PC-9 (cell line): ENCODE measurements at regions of chr1 and their contacts with region 1.

Region 1: GRCh38 chr1:23559136-23559984 is at the start of gene ID3:
- DNase-seq: peak; percentile 87 to 96
- H3K4me3 ChIP-seq: peak within 1 kb of the TSS; percentile 67
- H3K27ac ChIP-seq: peak within 1 kb of the TSS; percentile 96
- H3K4me1 ChIP-seq: peaks cover 42% of the 10 kb centered on the region
- H3K27me3 ChIP-seq: no peaks in the 10 kb centered on the region
- CTCF ChIP-seq: no peak
- total RNA-seq, gene ID3: 10.4 and 24.7 TPM in 2 replicates

Region 2: DNA sequence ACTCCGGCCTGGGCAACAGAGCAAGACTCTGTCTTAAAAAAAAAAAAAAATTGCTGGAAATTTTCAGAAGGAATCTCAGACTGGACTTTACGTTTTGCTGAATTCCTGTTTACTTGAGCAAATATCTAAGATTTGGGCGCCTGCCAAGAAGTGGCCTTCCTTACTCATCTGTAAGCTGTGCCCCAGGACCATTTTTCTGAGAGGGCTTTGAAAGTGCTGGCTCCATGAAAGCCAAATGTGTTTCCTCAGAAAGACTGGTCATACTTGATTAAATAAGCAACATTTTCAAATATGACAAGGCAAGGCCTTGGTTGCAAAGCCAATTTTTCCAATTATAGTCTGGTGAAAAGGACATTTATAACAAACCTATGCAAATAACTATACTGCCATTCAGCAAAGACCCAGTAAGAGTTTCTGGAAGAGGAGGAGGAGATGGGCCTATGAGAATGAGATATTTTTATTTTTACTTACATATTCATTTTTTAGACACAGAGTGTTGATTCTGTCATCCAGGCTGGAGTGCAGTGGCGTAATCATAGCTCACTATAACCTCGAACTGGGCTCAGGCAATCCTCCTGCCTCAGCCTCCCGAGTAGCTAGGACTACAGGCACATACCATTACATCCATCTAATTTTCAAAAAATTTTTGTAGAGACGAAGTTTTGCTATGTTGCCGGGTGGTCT is 285.8 kb before region 1 on chr1:
- CTCF ChIA-PET with region 1: no interaction called
- POLR2A ChIA-PET with region 1: no interaction called
- intact Hi-C with region 1: no loop called
- DNase-seq: peak; percentile 46 to 57
- H3K4me3 ChIP-seq: no peak overlapping the region
- H3K27ac ChIP-seq: no peak overlapping the region
- H3K4me1 ChIP-seq: peaks cover 24% of the 10 kb centered on the region
- H3K27me3 ChIP-seq: no peaks in the 10 kb centered on the region
- CTCF ChIP-seq: no peak

Region 3: GRCh38 chr1:23585447-23586015 is 26.2 kb after region 1 on chr1:
- CTCF ChIA-PET with region 1: no interaction called
- POLR2A ChIA-PET with region 1: interaction called, 4 read pairs
- intact Hi-C with region 1: loop called (anchors 1 kb)
- DNase-seq: peak; percentile 56 to 91
- H3K4me3 ChIP-seq: no peak overlapping the region
- H3K27ac ChIP-seq: peak overlapping the region; percentile 80
- H3K4me1 ChIP-seq: peaks cover 13% of the 10 kb centered on the region
- H3K27me3 ChIP-seq: no peaks in the 10 kb centered on the region
- CTCF ChIP-seq: no peak

Region 4: DNA sequence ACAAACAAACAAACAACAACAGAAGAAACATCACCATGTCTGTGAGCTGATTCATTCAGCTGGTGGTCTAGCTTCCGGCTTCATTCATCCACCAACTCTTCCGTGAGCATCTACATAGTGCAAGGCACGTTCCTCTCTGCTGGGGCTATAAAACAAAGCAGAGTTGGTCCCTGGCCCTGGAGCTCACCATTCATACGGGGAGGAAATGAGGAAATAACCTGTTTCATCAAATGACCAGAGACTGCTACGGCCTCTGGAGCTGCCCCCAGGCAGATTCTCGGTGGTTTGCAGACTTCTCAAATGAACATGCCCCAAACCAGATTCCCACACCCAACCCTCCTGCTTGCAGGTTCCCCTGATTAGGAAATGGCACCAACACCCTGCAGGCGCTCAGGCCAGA is 40.9 kb after region 1 on chr1:
- CTCF ChIA-PET with region 1: interaction called, 14 read pairs
- POLR2A ChIA-PET with region 1: interaction called, 17 read pairs
- intact Hi-C with region 1: no loop called
- DNase-seq: peak in 1 of 2 experiments; percentile 67
- H3K4me3 ChIP-seq: no peak overlapping the region
- H3K27ac ChIP-seq: no peak overlapping the region
- H3K4me1 ChIP-seq: peaks cover 39% of the 10 kb centered on the region
- H3K27me3 ChIP-seq: no peaks in the 10 kb centered on the region
- CTCF ChIP-seq: no peak

Region 5: GRCh38 chr1:23627069-23627735 is 67.8 kb after region 1 on chr1:
- CTCF ChIA-PET with region 1: no interaction called
- POLR2A ChIA-PET with region 1: interaction called, 5 read pairs
- intact Hi-C with region 1: loop called (anchors 1 kb)
- DNase-seq: peak; percentile 26 to 48
- H3K4me3 ChIP-seq: peak overlapping the region; percentile 20; the same call in 1 of the 2 replicates
- H3K27ac ChIP-seq: no peak overlapping the region
- H3K4me1 ChIP-seq: no peaks in the 10 kb centered on the region; the same call in 1 of the 2 replicates
- H3K27me3 ChIP-seq: no peaks in the 10 kb centered on the region
- CTCF ChIP-seq: no peak